PC-3 (cell line): ENCODE measurements at regions of chr11 and their contacts with region 1.

Region 1: DNA sequence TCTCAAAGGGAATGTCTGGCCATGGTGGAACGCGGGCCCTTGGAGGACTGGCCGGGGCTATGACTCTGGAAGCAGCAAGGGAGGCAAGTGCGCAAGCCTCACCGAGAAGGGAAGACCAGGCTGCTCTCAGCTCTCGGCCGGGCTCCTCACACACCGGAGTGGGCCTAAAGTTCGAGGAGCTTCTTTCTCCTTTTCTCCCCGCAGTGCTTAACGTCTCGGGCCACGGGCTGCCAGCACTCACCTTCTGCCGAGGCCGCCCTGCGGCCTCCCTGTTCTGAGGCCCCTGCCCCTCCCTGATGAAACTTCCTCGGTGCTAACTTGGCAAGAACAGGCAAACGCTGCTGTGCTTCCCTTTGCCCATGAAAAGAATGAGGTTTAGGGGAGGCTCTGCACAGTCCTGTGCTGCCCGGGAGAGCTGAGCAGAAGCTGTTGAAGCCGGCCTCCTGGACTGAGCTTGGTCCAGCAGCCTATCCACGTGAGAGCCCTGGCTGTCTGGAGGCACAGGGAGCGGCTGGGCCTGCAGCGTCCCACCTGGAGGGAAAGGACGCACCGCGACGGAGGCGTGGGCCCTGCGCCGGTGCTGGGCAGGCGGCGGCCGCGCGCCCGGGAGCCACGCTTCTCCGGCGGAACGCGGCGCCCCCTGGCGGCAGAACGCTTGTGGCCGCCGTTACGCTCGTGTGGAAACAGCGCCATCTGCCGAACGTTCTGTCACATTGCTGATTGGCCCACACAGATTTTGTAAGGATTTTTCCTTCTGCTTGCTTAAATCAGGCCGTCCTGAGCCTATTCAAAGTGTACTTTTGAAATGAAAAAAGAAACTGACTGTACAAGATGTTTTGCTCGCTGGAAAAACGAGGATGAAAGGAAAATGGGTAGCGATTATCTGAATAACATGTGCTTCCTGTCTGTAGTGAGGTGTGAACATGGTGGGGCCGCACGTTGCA is 65.0 kb upstream of the TMEM45B start:
- DNase-seq: peak; percentile 89
- ATAC-seq: peak; percentile 97
- H3K4me3 ChIP-seq: peak overlapping the region; percentile 39; the same call in 1 of the 2 replicates
- H3K27ac ChIP-seq: no peak overlapping the region
- H3K4me1 ChIP-seq: peaks cover 5% of the 10 kb centered on the region; the same call in 1 of the 2 replicates
- H3K27me3 ChIP-seq: no peaks in the 10 kb centered on the region
- CTCF ChIP-seq: peak; percentile 98

Region 2: GRCh38 chr11:128884703-128885338 is 865.8 kb before region 1 on chr11:
- CTCF ChIA-PET with region 1: no interaction called
- POLR2A ChIA-PET with region 1: no interaction called
- intact Hi-C with region 1: loop called (anchors 5 kb)
- DNase-seq: peak; percentile 93
- ATAC-seq: peak; percentile 92
- H3K4me3 ChIP-seq: peak overlapping the region; percentile 45; the same call in 1 of the 2 replicates
- H3K27ac ChIP-seq: no peak overlapping the region
- H3K4me1 ChIP-seq: no peaks in the 10 kb centered on the region
- H3K27me3 ChIP-seq: peaks cover 15% of the 10 kb centered on the region; the same call in 1 of the 2 replicates
- CTCF ChIP-seq: peak; percentile 91

Region 3: DNA sequence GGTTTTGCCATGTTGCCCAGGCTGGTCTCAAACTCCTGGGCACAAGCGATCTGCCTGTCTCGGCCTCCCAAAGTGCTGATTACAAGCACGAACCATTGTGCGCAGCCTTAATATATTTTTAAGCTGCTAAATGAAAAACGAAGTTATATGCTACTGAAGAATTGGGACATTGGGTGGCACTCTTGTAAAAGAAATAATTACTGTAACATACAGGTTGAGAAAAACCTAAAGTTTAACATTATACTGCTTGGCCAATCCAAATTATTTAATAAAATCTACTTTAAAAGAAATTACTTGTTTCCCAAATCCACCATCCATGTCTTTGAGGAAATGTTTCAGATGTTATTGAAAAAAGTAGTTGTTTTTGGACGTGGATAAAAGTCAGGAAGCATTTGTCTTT is 520.6 kb before region 1 on chr11:
- CTCF ChIA-PET with region 1: no interaction called
- POLR2A ChIA-PET with region 1: no interaction called
- intact Hi-C with region 1: loop called (anchors 5 kb)
- DNase-seq: peak; percentile 43
- ATAC-seq: peak; percentile 44; the same call in 1 of the 2 replicates
- H3K4me3 ChIP-seq: no peak overlapping the region
- H3K27ac ChIP-seq: no peak overlapping the region
- H3K4me1 ChIP-seq: peaks cover 10% of the 10 kb centered on the region
- H3K27me3 ChIP-seq: no peaks in the 10 kb centered on the region
- CTCF ChIP-seq: peak; percentile 55

Region 4: GRCh38 chr11:129364143-129364654 is 386.4 kb before region 1 on chr11:
- CTCF ChIA-PET with region 1: interaction called, 9 read pairs
- POLR2A ChIA-PET with region 1: no interaction called
- intact Hi-C with region 1: loop called (anchors 1 kb)
- DNase-seq: peak; percentile 96
- ATAC-seq: peak; percentile 90
- H3K4me3 ChIP-seq: peak overlapping the region; percentile 33; the same call in 1 of the 2 replicates
- H3K27ac ChIP-seq: no peak overlapping the region
- H3K4me1 ChIP-seq: peaks cover 31% of the 10 kb centered on the region
- H3K27me3 ChIP-seq: peaks cover 26% of the 10 kb centered on the region; the same call in 1 of the 2 replicates
- CTCF ChIP-seq: peak; percentile 100

Region 5: DNA sequence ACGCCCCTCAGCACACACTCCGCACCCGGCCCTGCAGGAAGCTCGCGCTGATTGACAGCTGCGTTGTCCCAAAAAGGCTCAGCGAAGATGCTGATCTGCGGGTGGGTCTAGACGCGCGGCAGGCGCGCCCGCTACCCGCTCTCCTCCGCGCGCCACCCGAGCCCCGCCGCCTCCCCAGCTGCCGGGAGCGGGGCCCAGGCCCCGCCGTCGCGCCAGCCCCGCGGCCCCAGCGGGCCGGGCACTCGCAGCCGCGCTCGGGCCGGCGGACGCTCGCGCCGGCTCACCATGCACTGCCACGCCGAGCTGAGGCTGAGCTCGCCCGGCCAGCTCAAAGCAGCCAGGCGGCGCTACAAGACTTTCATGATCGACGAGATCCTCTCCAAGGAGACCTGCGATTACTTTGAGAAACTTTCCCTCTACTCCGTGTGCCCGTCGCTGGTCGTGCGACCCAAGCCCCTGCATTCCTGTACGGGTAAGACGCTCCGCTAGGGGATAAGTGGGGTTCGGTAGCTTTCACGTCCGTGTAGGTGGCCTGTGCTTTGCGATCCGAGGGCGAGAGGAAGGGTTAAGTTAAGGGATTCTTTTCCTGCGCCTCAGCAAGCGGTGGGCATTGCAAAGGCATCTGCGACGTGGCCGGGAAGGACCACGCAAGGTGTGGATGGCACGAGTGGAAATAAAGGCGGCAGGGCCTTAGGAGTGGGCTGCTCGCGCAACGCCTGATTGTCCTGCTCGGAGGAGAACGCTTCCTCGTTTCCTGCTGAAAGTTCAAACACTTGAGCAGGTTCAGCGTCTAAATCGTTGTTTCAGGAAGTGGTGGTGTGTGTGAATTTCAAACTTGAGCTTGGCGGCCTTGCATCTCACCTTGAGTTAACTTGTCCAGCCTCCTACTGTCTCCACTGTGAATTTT is 374.6 kb before region 1 on chr11 and contains the start of gene BARX2:
- CTCF ChIA-PET with region 1: interaction called, 3 read pairs
- POLR2A ChIA-PET with region 1: no interaction called
- intact Hi-C with region 1: loop called (anchors 1 kb)
- DNase-seq: peak; percentile 86
- ATAC-seq: peak; percentile 94
- H3K4me3 ChIP-seq: peak within 1 kb of the TSS; percentile 63
- H3K27ac ChIP-seq: no peak within 1 kb of the TSS
- H3K4me1 ChIP-seq: peaks cover 19% of the 10 kb centered on the region; the same call in 1 of the 2 replicates
- H3K27me3 ChIP-seq: peaks cover 81% of the 10 kb centered on the region
- CTCF ChIP-seq: peak; percentile 73
- total RNA-seq, gene BARX2: 0.47 and 1.2 TPM in 2 replicates

Region 6: DNA sequence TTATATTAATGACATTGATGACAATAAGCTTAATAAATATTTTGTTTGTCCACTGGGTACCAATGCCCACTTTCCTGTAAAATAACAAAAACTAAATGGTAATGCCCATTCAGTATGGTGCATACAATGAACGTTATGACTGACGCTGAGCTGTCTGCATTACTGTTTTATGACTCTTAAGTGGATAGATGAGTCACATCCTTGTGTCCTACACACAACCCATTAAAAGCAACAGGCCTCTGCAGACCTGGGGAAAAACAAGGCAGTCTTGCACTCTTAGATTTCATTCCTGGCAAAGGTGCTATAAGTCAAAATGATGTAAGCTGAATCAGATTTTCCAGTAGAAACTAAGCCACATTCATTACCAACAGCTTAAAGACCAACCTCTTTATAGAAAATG is 111.3 kb before region 1 on chr11:
- CTCF ChIA-PET with region 1: no interaction called
- POLR2A ChIA-PET with region 1: no interaction called
- intact Hi-C with region 1: loop called (anchors 5 kb)
- DNase-seq: peak; percentile 99
- ATAC-seq: peak; percentile 65
- H3K4me3 ChIP-seq: 0 out of 2 replicates have a peak overlapping the region, but pooled peaks have one; percentile 13
- H3K27ac ChIP-seq: peak overlapping the region; percentile 92
- H3K4me1 ChIP-seq: peaks cover 68% of the 10 kb centered on the region
- H3K27me3 ChIP-seq: no peaks in the 10 kb centered on the region
- CTCF ChIP-seq: no peak

Region 7: DNA sequence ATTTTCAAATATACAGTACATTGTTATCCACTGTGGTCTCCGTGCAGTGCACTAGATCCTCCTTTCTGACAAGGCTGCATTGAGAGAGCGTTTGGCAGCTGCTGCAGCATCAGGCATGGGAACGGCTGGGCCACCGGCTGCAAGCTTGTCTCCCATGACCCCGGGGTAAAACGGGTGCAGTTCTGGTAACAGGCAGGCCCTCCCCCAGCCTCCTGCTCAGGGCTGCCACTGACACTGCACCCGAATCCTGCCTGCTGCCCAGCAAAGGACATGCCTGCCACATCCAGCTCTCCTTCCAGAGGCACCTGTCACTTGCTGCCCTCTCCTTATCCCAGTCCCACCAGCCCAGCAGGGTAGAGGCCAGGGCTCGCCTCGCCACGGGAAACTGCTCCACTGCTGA is 59.5 kb before region 1 on chr11:
- CTCF ChIA-PET with region 1: no interaction called
- POLR2A ChIA-PET with region 1: no interaction called
- intact Hi-C with region 1: no loop called
- DNase-seq: no peak
- ATAC-seq: no peak
- H3K4me3 ChIP-seq: no peak overlapping the region
- H3K27ac ChIP-seq: no peak overlapping the region
- H3K4me1 ChIP-seq: no peaks in the 10 kb centered on the region
- H3K27me3 ChIP-seq: 0 out of 2 replicates have a peak, but pooled peaks cover 4% of the 10 kb centered on the region
- CTCF ChIP-seq: no peak

Region 8: DNA sequence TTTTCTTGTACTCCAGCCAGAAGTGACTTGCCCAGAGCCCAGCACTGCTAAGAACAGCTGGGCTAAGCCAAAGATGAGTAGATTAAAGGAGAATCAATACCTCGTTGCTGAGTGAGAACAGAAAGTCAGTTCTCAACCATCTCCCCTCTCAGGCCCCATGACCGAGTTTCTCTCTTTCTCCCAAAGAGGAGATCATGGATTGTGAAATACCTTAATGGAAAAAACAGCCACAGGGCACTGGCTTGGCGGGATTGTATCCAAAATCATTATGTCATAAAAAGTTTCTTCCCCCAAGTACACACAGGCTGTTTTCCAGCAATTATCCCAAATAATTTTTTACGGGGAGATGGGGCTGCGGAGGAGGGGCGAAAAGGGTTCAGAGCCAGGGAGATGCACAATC is 46.8 kb before region 1 on chr11:
- CTCF ChIA-PET with region 1: no interaction called
- POLR2A ChIA-PET with region 1: no interaction called
- intact Hi-C with region 1: loop called (anchors 5 kb)
- DNase-seq: peak; percentile 60
- ATAC-seq: no peak
- H3K4me3 ChIP-seq: no peak overlapping the region
- H3K27ac ChIP-seq: peak overlapping the region; percentile 8; the same call in 1 of the 2 replicates
- H3K4me1 ChIP-seq: peaks cover 15% of the 10 kb centered on the region
- H3K27me3 ChIP-seq: no peaks in the 10 kb centered on the region
- CTCF ChIP-seq: no peak